Mammary epithelial cell (primary cell): ENCODE measurements at regions of chr3 and their contacts with region 1.

Region 1: GRCh38 chr3:185677146-185677829 is 91.2 kb downstream of the SENP2 start:
- DNase-seq: peak; percentile 96
- H3K4me3 ChIP-seq: no peak overlapping the region
- H3K27ac ChIP-seq: peak overlapping the region; percentile 67
- H3K4me1 ChIP-seq: peaks cover 4% of the 10 kb centered on the region
- H3K27me3 ChIP-seq: no peaks in the 10 kb centered on the region
- CTCF ChIP-seq: peak; percentile 83 to 89

Region 2: GRCh38 chr3:185444329-185444728 is 233.0 kb before region 1 on chr3:
- CTCF ChIA-PET with region 1: no interaction called
- dilution Hi-C with region 1: no loop called
- in situ Hi-C with region 1: no loop called
- intact Hi-C with region 1: no loop called
- DNase-seq: no peak
- H3K4me3 ChIP-seq: no peak overlapping the region
- H3K27ac ChIP-seq: no peak overlapping the region
- H3K4me1 ChIP-seq: no peaks in the 10 kb centered on the region
- H3K27me3 ChIP-seq: no peaks in the 10 kb centered on the region
- CTCF ChIP-seq: no peak

Region 3: GRCh38 chr3:185717121-185717520 is 39.8 kb after region 1 on chr3:
- CTCF ChIA-PET with region 1: interaction called, 3 read pairs
- dilution Hi-C with region 1: no loop called
- in situ Hi-C with region 1: loop called in 1 of 2 experiments (anchors 10 kb)
- intact Hi-C with region 1: loop called (anchors 1 kb)
- DNase-seq: peak; percentile 62
- H3K4me3 ChIP-seq: no peak overlapping the region
- H3K27ac ChIP-seq: peak overlapping the region; percentile 90
- H3K4me1 ChIP-seq: peaks cover 59% of the 10 kb centered on the region
- H3K27me3 ChIP-seq: no peaks in the 10 kb centered on the region
- CTCF ChIP-seq: no peak

Region 4: GRCh38 chr3:185727873-185728272 is 50.6 kb after region 1 on chr3:
- CTCF ChIA-PET with region 1: interaction called, 4 read pairs
- dilution Hi-C with region 1: loop called (anchors 5 kb)
- in situ Hi-C with region 1: loop called in 1 of 2 experiments (anchors 10 kb)
- intact Hi-C with region 1: loop called (anchors 1 kb)
- DNase-seq: peak; percentile 94
- H3K4me3 ChIP-seq: no peak overlapping the region
- H3K27ac ChIP-seq: peak overlapping the region; percentile 98
- H3K4me1 ChIP-seq: peaks cover 67% of the 10 kb centered on the region
- H3K27me3 ChIP-seq: no peaks in the 10 kb centered on the region
- CTCF ChIP-seq: no peak

Region 5: DNA sequence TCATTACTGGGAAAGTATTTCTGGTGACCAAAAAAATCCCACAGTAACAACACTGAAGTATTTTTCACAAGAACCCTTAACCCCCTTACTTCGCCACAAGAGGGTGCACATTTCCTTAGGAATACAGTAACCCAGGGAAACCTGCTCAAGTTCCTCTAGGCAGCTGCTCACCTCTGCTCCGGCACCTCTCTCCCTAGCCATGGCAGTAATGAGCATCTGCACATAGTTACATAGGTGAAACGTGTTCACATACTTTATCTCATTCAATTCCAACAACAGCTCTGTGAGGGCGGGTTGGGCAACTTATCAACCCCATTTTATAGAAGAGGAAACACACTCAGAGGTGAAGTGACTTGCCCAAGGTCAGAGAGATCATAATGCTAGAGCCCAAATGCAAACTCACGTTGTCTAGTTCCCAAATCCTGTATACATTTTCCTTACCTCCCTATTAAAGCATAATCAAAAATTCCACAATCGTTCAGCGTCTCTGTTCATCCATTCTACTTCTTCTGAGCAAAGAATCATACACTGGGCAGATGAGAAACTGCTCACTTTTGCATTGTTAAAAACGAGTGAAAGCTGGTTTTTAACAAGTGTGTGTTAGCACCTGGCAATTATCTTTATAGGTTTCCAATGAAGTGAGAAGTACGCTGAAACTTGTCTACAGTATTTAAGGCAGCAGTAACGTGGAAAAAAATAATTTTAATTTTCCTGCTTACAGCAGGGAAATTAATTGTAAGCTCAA is 56.9 kb after region 1 on chr3:
- CTCF ChIA-PET with region 1: no interaction called
- dilution Hi-C with region 1: loop called (anchors 5 kb)
- in situ Hi-C with region 1: loop called in 1 of 2 experiments (anchors 10 kb)
- intact Hi-C with region 1: loop called (anchors 1 kb)
- DNase-seq: peak; percentile 80
- H3K4me3 ChIP-seq: no peak overlapping the region
- H3K27ac ChIP-seq: peak overlapping the region; percentile 99
- H3K4me1 ChIP-seq: peaks cover 76% of the 10 kb centered on the region
- H3K27me3 ChIP-seq: no peaks in the 10 kb centered on the region
- CTCF ChIP-seq: peak; percentile 77 to 80

Region 6: GRCh38 chr3:185764163-185764979 is 87.1 kb after region 1 on chr3:
- CTCF ChIA-PET with region 1: interaction called, 3 read pairs
- dilution Hi-C with region 1: no loop called
- in situ Hi-C with region 1: loop called in 1 of 2 experiments (anchors 5 kb)
- intact Hi-C with region 1: loop called (anchors 1 kb)
- DNase-seq: peak; percentile 61
- H3K4me3 ChIP-seq: no peak overlapping the region
- H3K27ac ChIP-seq: peak overlapping the region; percentile 0
- H3K4me1 ChIP-seq: peaks cover 58% of the 10 kb centered on the region
- H3K27me3 ChIP-seq: no peaks in the 10 kb centered on the region
- CTCF ChIP-seq: no peak

Region 7: DNA sequence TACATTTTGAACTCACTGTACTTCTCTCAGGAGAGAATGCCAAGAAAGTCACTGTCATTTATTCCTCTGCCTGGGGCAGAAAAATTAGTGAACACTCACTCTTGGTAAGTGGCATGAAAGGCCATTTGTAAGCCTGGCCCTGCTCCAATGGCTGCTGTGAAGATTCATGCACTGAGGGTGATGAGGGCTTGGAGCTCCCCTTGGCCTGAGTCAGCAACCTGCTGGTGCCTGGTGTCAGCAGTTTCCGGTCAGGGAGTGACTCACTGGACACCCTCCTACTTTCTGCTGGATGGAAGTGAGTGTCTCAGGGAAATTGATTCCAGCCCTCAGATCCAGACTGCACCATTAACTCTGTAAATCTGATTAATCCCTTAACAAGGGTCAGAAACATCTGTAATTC is 222.9 kb after region 1 on chr3:
- CTCF ChIA-PET with region 1: no interaction called
- dilution Hi-C with region 1: no loop called
- in situ Hi-C with region 1: loop called (anchors 10 to 25 kb)
- intact Hi-C with region 1: loop called (anchors 5 kb)
- DNase-seq: peak; percentile 98
- H3K4me3 ChIP-seq: no peak overlapping the region
- H3K27ac ChIP-seq: no peak overlapping the region
- H3K4me1 ChIP-seq: peaks cover 10% of the 10 kb centered on the region
- H3K27me3 ChIP-seq: no peaks in the 10 kb centered on the region
- CTCF ChIP-seq: no peak

Region 8: DNA sequence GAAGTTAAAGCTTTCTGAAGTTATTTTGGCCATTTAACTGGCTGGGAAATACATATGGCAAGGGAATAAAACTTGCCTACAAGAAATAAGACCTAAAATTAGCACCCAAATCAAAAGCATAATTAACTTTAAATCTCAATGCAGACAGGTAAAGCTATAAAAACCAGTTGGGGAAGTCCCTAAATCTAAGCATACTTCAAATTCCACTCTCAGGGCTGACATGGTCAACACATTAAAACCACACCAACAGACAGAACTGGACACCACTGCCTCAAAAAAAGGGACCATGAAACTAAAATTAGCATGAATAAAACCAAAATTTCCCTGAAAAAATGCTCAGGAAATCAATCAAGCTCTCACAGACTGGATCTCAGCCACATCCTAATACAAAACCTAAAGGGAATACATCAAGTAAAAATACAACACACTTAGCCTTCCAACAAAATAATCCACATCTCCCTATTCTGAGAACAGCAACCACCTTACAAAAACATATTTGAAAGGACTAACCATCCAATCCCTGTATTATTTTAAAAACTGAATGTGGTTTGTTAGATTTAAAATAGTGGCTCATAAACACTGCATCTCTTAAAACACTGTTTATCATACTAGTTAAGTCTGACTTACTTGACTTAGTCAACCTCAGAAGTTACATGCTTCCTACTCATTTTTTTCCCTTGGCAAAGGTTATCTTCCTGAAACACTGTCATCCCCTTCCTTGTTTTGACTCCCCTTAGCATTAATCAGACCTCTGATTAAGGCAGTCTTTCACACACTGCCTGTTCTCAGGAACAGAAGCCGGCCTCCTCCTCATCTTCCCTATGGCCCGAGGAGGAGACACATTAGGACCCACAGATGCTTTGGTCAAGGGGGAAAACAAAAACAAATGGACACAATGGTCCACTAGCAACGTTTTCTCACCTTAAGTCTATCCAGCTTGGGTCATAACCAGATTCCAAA is 252.2 kb after region 1 on chr3:
- CTCF ChIA-PET with region 1: no interaction called
- dilution Hi-C with region 1: no loop called
- in situ Hi-C with region 1: loop called in 1 of 2 experiments (anchors 25 kb)
- intact Hi-C with region 1: loop called (anchors 1 kb)
- DNase-seq: peak; percentile 52
- H3K4me3 ChIP-seq: peak overlapping the region in 2 of 3 experiments; percentile 1 to 11
- H3K27ac ChIP-seq: peak overlapping the region; percentile 11
- H3K4me1 ChIP-seq: peaks cover 59% of the 10 kb centered on the region
- H3K27me3 ChIP-seq: no peaks in the 10 kb centered on the region
- CTCF ChIP-seq: no peak